ENCODE measurements at regions of chr13 and their contacts with region 1.

Region 1: DNA sequence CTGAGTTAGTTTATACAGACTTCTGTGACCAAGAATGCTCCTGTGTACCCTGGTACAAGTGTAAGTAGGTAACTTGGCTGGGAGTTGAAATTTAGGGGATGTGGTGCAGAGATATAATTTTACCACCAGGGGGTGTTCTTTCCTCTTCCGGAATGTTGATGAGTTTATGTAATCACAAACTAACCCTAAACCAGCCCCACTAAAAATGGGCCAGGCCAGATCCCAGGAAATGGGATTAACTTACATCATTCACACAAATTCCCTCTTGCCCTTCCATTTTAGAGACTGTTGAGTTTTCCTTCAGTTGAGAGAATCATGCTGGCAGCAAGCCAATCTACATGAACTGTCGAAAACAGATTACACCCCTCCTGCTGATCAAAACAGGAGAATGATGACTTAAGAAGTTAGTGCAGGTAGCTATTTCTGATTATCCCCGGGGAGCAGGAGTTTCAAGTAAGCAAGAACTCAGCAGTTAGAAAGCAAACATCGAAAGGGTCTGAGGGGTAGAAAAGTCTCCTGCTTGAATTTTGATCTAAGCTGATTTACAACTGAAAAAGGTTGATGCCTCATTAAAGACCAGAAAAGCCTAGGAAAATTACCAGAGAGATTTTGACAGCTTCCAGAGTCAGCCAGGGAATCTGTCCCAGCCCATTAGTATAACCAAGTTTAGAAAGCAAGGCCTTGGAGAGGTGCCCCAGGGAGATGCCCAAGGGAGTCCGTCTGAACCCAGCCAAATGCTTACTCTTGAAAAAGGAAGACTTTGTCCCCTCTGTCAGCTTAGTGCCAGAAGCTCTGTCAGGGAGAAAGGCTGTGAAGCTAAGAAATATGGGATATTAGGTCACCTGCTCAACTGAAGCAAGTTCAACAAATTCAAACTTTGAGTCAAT is 32.3 kb upstream of the MED4 start:
- DNase-seq: peak; percentile 53 to 78 (median 76)
- ATAC-seq: peak; percentile 56 to 82 (median 74)
- H3K4me3 ChIP-seq: peak overlapping the region in 1 of 12 donors; percentile 6
- H3K27ac ChIP-seq: peak overlapping the region; percentile 75 to 96 (median 90)
- H3K4me1 ChIP-seq: peaks cover 0 to 51% (median 40%) of the 10 kb centered on the region in 12 donors
- H3K27me3 ChIP-seq: no peaks in the 10 kb centered on the region
- CTCF ChIP-seq: peak; percentile 60 to 86 (median 75)
- POLR2A ChIP-seq: no peak

Region 2: DNA sequence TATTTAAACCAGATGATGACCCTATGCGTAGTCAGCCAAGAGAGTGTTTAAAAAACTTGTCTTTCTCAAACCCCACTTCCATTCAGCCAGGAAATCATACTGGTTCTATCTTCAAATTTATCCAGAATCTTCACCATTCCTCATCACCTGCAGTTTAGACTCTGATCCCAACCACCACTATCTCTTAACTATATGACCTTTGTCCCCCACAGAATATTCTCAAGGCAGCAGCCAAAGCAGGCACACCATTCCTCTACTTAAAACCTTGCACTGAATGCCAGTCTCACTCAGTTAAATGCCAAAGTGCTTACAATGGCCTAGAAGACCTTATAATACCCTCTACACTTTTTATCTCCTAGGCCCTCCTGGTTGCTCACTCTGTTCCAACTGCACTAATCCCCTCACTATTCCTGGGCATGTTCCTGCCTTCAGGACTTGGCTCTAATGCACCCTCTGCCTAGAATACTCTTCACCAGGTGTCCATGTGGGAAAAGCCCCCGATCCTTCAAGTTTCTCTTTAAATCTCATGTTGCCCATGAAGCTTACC is 136.2 kb before region 1 on chr13:
- intact Hi-C with region 1: no loop called
- DNase-seq: no peak
- ATAC-seq: peak; percentile 44 to 87 (median 67)
- H3K4me3 ChIP-seq: no peak overlapping the region
- H3K27ac ChIP-seq: peak overlapping the region in 1 of 12 donors; percentile 27
- H3K4me1 ChIP-seq: peaks cover 0 to 17% (median 0%) of the 10 kb centered on the region in 12 donors
- H3K27me3 ChIP-seq: no peaks in the 10 kb centered on the region
- CTCF ChIP-seq: no peak
- POLR2A ChIP-seq: no peak

Region 3: DNA sequence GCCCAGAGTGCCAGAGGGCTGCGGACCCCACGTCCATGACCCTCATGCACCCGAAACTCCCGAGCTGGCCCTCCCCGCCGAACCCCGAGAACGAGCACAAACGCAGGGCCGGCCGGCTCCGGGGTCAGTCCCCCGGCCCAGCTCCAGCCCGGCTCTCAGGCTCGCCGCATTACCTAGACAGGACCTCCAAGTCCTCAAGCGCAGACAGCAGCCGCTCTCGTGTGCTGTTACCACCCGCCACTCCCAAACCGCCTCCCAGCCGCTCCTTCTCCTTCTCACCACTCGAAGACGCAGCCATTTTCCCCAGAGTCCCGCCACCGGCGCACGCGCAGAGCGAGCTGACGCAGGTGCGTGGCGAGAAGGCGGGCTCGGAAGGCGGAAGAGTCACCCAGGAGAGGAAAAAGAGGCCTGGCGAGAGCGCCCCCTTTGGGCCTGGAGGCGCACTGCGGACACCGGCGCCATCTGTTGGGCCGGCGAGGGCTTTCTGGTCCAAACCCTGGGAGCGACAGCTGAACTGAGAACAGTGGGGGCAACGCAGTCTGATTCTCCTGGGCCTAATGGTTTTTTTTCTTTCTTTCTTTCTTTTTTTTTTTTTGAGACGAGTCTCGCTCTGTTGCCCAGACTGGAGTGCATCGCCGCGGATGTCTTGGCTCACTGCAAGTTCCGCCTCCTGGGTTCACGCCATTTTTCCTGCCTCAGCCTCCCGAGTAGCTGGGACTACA is 32.2 kb before region 1 on chr13 and contains the start of gene MED4:
- intact Hi-C with region 1: loop called in 1 of 10 experiments (anchors 1 kb)
- DNase-seq: peak; percentile 95 to 98 (median 96)
- ATAC-seq: peak; percentile 94 to 99 (median 98)
- H3K4me3 ChIP-seq: peak within 1 kb of the TSS; percentile 65 to 99 (median 90)
- H3K27ac ChIP-seq: peak within 1 kb of the TSS; percentile 78 to 95 (median 88)
- H3K4me1 ChIP-seq: peaks cover 0 to 47% (median 34%) of the 10 kb centered on the region in 12 donors
- H3K27me3 ChIP-seq: no peaks in the 10 kb centered on the region
- CTCF ChIP-seq: peak; percentile 98 to 100 (median 99)
- POLR2A ChIP-seq: peak in 1 of 2 donors; percentile 77
- total RNA-seq, gene MED4: 24.9 to 50.3 (median 46.0) TPM

Region 4: GRCh38 chr13:48110931-48111721 is 16.1 kb before region 1 on chr13:
- intact Hi-C with region 1: loop called in 2 of 10 experiments (anchors 2 kb)
- DNase-seq: peak in 4 of 5 donors; percentile 65 to 78 (median 68)
- ATAC-seq: peak in 3 of 4 donors; percentile 79 to 86 (median 83)
- H3K4me3 ChIP-seq: peak overlapping the region in 1 of 12 donors; percentile 17
- H3K27ac ChIP-seq: peak overlapping the region; percentile 62 to 93 (median 78)
- H3K4me1 ChIP-seq: peaks cover 0 to 55% (median 27%) of the 10 kb centered on the region in 12 donors
- H3K27me3 ChIP-seq: no peaks in the 10 kb centered on the region
- CTCF ChIP-seq: no peak
- POLR2A ChIP-seq: no peak

Region 5: DNA sequence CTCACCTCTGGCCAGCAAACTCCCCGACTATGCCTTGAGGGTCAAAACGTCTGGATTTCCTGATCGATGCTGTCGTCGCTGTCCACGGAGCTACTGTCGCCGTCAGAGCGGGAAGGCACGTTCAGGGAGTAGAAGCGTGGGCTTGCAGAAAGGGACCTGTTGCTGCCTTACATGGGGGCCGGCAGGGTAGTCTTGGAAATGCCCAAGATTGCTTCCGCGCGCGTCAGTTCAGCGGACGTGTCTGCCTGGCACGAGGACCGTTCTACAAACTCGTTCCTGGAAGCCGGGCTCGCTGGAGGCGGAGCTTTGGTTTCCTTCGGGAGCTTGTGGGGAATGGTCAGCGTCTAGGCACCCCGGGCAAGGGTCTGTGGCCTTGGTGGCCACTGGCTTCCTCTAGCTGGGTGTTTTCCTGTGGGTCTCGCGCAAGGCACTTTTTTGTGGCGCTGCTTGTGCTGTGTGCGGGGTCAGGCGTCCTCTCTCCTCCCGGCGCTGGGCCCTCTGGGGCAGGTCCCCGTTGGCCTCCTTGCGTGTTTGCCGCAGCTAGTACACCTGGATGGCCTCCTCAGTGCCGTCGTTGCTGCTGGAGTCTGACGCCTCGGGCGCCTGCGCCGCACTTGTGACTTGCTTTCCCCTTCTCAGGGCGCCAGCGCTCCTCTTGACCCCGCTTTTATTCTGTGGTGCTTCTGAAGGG is 191.8 kb after region 1 on chr13:
- intact Hi-C with region 1: loop called in 1 of 10 experiments (anchors 10 kb)
- DNase-seq: peak in 3 of 5 donors; percentile 27 to 58 (median 27)
- ATAC-seq: no peak
- H3K4me3 ChIP-seq: peak overlapping the region in 8 of 12 donors; percentile 15 to 51 (median 35)
- H3K27ac ChIP-seq: peak overlapping the region in 2 of 12 donors; percentile 36 to 58
- H3K4me1 ChIP-seq: peaks cover 0 to 21% (median 10%) of the 10 kb centered on the region in 12 donors
- H3K27me3 ChIP-seq: no peaks in the 10 kb centered on the region
- CTCF ChIP-seq: no peak
- POLR2A ChIP-seq: no peak